Calu3 (cell line): ENCODE measurements at regions of chr11 and their contacts with region 1.

Region 1: DNA sequence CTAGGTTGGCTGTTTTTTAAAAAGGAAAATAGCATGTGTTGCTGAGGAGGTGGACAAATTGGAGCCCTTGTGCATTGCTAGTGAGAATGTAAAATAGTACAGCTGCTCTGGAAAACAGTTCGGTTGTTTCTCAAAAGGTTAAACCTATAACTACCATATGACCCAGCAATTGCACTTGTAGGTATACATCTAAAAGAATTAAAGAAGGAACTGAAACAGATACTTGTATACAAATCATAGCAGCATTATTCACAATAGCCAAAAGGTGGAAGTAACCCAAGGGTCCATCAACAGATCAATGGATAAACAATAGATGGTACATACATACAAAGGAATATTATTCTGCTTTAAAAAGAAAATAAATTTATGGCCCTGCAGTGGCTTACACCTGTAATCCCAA is 111.4 kb downstream of the CSTPP1 start:
- DNase-seq: no peak
- H3K4me3 Mint-ChIP-seq: no peak overlapping the region
- H3K27ac Mint-ChIP-seq: no peak overlapping the region
- H3K4me1 Mint-ChIP-seq: no peaks in the 10 kb centered on the region
- H3K27me3 Mint-ChIP-seq: no peaks in the 10 kb centered on the region
- CTCF ChIP-seq: no peak

Region 2: GRCh38 chr11:46948378-46949131 is 99.4 kb before region 1 on chr11:
- CTCF ChIA-PET with region 1: no interaction called
- intact Hi-C with region 1: no loop called
- DNase-seq: no peak
- H3K4me3 Mint-ChIP-seq: no peak overlapping the region
- H3K27ac Mint-ChIP-seq: no peak overlapping the region
- H3K4me1 Mint-ChIP-seq: no peaks in the 10 kb centered on the region
- H3K27me3 Mint-ChIP-seq: no peaks in the 10 kb centered on the region
- CTCF ChIP-seq: no peak

Region 3: GRCh38 chr11:47033439-47033838 is 14.5 kb before region 1 on chr11:
- CTCF ChIA-PET with region 1: no interaction called
- intact Hi-C with region 1: loop called (anchors 1 kb)
- DNase-seq: no peak
- H3K4me3 Mint-ChIP-seq: no peak overlapping the region
- H3K27ac Mint-ChIP-seq: no peak overlapping the region
- H3K4me1 Mint-ChIP-seq: no peaks in the 10 kb centered on the region
- H3K27me3 Mint-ChIP-seq: no peaks in the 10 kb centered on the region
- CTCF ChIP-seq: no peak